Common myeloid progenitor, CD34-positive (primary cell): ENCODE measurements at regions of chr14 and their contacts with region 1.

Region 1: DNA sequence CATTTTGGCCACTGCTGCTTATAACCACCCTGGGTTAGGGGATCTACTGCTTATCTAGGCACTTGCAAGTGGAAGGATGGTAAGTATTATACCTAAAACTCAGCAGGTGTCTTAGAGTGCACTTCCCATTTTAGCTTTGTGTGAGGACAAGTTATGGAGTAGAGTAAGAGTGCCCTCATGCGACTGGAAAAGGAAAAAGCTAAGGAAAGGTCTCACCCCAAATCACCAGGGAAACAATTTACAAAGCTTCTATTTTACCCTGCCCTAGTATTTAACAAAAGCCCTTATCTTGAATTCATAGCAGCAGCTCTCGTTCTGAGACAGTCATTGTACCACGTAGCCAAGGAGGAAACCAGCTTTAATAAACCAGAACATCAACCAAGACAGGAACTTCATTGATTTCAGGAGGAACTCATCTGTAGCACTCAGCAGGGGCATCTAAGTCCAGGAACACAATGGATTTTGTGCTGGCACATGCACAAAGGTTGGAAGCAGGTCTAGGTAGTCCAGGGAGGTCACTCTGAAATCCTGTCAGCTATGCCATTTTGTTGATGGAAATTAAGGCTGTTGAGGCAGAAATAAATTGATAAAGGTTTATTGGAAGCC is 2.9 kb downstream of the RDH12 start:
- DNase-seq: peak; percentile 78 to 90 (median 85)
- H3K4me3 ChIP-seq: no peak overlapping the region
- H3K27ac ChIP-seq: no peak overlapping the region
- H3K4me1 ChIP-seq: peaks cover 0 to 2% (median 0%) of the 10 kb centered on the region in 4 experiments
- H3K27me3 ChIP-seq: no peaks in the 10 kb centered on the region

Region 2: DNA sequence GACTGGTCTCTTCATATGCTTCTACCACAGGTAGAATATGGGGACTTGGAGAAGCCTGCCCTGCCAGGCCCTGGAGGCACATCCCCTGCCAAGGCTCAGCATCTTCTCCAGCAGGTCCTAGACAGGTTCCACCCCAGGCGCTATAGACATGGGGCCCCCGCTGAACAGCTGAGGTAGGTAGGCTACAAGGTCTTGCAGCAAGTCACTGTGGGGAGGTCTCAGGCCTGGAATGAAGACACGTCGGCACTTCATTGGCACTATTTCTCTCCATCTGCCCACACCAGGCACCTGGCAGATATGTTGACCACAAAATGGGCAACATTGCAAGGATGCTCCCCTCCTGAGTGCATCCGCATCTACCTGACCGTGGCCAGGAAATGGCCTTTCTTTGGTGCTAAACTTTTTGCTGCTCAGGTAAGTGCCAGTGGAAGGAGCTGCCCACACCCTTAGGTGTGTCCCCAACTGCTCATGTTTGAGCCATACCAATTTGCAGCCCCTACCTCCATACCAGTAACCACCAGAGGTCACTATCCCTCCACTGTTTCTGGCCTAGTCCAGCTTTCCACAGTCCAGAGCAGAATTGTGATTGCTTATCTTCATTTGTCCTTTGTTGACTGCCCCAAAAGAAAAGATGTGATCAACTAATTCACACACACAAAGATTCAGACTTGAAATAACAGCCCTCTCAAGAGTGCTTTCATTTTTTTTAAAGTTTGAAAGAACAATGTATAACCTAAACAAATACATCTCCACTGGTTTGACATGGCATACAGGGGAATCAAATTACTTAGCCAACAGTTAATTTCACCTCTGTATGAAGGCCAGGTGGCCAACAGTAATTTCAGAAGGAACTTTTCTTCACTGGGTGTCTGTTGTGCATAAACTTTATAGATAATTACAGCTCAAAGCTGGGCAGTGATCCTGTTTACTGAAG is 120.6 kb before region 1 on chr14:
- CTCF ChIA-PET with region 1: interaction called, 221 read pairs
- POLR2A ChIA-PET with region 1: no interaction called
- DNase-seq: peak; percentile 51 to 72 (median 63)
- H3K4me3 ChIP-seq: no peak overlapping the region
- H3K27ac ChIP-seq: no peak overlapping the region
- H3K4me1 ChIP-seq: no peaks in the 10 kb centered on the region
- H3K27me3 ChIP-seq: peaks cover 0 to 6% (median 0%) of the 10 kb centered on the region in 5 experiments

Region 3: GRCh38 chr14:67619446-67620216 is 85.0 kb before region 1 on chr14 and contains the start of gene ARG2:
- CTCF ChIA-PET with region 1: interaction called, 49 read pairs
- POLR2A ChIA-PET with region 1: no interaction called
- DNase-seq: peak; percentile 92 to 95 (median 94)
- H3K4me3 ChIP-seq: peak within 1 kb of the TSS; percentile 60 to 91 (median 79)
- H3K27ac ChIP-seq: peak within 1 kb of the TSS; percentile 78 to 91
- H3K4me1 ChIP-seq: peaks cover 16 to 36% (median 26%) of the 10 kb centered on the region in 4 experiments
- H3K27me3 ChIP-seq: peaks cover 0 to 6% (median 2%) of the 10 kb centered on the region in 5 experiments

Region 4: DNA sequence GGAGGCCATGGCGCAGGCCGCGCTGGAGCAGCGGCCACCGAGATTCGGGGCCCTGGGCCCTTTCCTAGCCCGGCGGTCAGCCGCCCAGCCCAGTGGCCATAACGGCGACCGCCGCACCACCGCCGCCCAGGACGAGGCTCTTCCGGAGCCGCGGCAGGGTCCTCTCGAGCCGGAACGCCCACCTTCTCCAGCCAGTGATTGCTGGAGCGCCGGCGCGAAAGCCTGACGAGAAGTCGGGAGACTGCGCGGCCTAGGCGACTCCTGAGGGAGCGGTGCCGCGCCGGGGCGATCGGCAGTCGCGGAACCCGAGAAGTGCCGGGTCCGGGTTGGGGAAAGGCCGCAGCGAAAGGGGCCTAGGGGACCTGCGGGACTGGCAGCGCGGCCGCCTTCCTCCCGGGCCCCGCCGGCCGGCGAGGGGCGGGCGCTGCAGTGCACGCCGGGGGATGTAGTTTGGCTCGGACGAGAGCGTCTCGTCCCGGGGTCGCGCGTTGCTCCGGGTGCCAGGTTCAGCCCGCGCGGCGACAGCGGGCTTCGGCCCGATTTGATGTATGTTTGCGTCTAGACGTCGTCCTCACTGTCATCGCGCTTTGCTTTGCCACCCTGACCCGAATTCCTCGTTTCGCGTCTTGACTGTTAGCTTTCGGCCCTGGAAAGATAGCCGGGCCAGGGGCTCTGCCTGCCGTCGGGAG is 30.0 kb before region 1 on chr14 and contains the start of gene VTI1B:
- CTCF ChIA-PET with region 1: interaction called, 20 read pairs
- POLR2A ChIA-PET with region 1: no interaction called
- DNase-seq: peak; percentile 80 to 90 (median 83)
- H3K4me3 ChIP-seq: peak within 1 kb of the TSS; percentile 86 to 99 (median 91)
- H3K27ac ChIP-seq: peak within 1 kb of the TSS; percentile 96 to 99
- H3K4me1 ChIP-seq: peaks cover 7 to 24% (median 19%) of the 10 kb centered on the region in 4 experiments
- H3K27me3 ChIP-seq: no peaks in the 10 kb centered on the region

Region 5: DNA sequence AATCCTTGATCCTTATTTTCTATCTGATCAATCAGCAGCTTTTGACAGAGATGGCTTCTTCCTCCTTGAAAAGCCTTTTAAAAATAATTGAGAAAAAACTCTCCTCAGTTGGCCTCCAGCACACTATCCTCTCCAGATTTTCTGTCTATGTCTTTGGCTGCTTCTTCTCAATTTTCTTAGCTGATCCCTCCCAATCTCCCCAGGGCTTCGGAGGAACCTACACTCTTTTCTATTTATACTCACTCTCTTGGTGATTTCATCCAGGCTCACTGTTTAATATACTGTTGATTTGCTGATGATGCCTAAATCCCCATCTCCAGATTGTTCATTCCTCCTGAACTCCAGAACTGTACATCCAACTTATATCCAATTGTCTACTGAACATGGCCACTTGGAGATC is 51.9 kb after region 1 on chr14:
- CTCF ChIA-PET with region 1: no interaction called
- POLR2A ChIA-PET with region 1: no interaction called
- DNase-seq: no peak
- H3K4me3 ChIP-seq: no peak overlapping the region
- H3K27ac ChIP-seq: no peak overlapping the region
- H3K4me1 ChIP-seq: no peaks in the 10 kb centered on the region
- H3K27me3 ChIP-seq: no peaks in the 10 kb centered on the region

Region 6: GRCh38 chr14:67837011-67837624 is 132.5 kb after region 1 on chr14:
- CTCF ChIA-PET with region 1: no interaction called
- POLR2A ChIA-PET with region 1: no interaction called
- DNase-seq: peak; percentile 90 to 94 (median 93)
- H3K4me3 ChIP-seq: no peak overlapping the region
- H3K27ac ChIP-seq: no peak overlapping the region
- H3K4me1 ChIP-seq: no peaks in the 10 kb centered on the region
- H3K27me3 ChIP-seq: no peaks in the 10 kb centered on the region

Region 7: DNA sequence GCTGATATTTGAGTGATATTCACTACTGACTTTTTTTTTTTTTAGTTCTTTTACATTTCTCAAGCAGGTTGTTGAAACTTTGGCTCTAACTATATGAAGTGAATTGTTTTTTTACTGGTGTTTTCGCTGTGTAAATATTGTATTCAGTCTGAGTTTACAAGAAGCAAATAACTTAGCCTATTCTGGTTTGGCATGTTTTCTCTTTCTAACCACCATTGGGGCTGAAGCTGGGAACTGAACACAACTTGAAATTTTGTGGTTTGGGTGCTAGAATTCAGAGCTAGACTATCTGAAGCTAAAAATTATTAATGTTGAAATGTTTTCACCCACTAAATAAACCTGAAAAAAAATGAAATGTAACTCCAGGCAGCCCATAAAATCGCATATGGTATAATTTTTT is 152.2 kb after region 1 on chr14:
- CTCF ChIA-PET with region 1: no interaction called
- POLR2A ChIA-PET with region 1: no interaction called
- DNase-seq: no peak
- H3K4me3 ChIP-seq: no peak overlapping the region
- H3K27ac ChIP-seq: no peak overlapping the region
- H3K4me1 ChIP-seq: peaks cover 14 to 28% (median 22%) of the 10 kb centered on the region in 4 experiments
- H3K27me3 ChIP-seq: no peaks in the 10 kb centered on the region